Mammary epithelial cell (primary cell): ENCODE measurements at regions of chr15 and their contacts with region 1.

Region 1: DNA sequence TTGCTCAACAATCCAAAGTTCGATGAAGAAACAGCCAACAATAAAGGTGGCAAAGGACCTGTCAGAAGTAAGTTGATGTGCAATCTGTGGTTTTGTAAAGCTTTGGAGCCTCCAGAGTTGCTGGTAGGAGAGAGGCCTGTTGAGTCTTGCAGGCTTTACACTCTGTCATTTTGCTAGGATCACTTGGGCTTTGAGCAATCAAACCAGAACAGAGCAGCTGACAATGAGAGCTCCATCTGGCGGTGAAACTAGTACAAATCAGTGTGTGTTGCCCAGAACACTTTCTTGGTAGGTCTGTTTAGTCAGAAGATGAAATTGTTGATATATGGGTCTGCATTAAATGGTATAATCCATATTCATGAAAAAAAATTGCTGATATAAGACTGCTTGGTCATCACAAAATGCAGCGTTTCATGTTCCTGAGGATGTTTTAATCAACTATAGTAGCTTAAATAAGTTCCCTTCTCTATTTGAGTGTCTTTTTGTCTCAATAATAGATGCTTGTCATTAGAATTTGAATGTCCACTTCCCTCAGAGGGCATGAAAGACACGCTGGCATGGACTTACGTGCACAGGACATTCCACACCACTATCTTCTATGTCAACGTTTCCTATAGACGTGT is 25.7 kb downstream of the TMOD2 start:
- DNase-seq: peak; percentile 92
- H3K4me3 ChIP-seq: no peak overlapping the region
- H3K27ac ChIP-seq: no peak overlapping the region
- H3K4me1 ChIP-seq: peaks cover 15% of the 10 kb centered on the region
- H3K27me3 ChIP-seq: no peaks in the 10 kb centered on the region
- CTCF ChIP-seq: peak; percentile 84 to 87

Region 2: DNA sequence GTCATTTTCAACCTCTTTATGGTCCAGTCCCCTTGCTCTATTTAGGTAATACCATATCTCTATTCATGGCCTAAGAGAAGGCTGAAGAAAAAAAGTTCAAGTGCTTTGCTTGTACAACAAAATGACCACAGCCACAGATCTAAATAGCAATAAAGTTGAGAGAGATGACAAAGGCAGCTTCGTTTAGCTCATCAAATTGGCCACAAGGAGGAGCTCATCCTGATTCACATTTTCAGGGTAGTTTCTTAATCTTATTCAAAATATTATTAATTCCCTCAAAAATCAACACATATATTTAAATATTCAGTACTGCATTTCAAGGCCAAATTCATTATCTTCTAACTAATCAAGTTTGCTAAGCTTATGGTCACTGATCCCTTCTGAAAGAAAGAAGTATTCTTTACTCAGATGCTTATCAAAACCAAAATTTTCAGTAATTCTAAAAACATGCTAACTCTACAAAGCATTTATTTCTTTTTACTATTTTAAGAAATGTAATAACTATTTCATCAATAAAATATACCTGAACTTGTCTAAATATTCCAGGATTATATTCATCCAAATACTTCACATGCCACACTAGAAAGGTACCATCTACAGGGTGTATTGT is 240.0 kb before region 1 on chr15:
- CTCF ChIA-PET with region 1: interaction called, 3 read pairs
- dilution Hi-C with region 1: no loop called
- in situ Hi-C with region 1: no loop called
- intact Hi-C with region 1: loop called (anchors 5 kb)
- DNase-seq: no peak
- H3K4me3 ChIP-seq: no peak overlapping the region
- H3K27ac ChIP-seq: no peak overlapping the region
- H3K4me1 ChIP-seq: no peaks in the 10 kb centered on the region
- H3K27me3 ChIP-seq: no peaks in the 10 kb centered on the region
- CTCF ChIP-seq: peak; percentile 67 to 78

Region 3: DNA sequence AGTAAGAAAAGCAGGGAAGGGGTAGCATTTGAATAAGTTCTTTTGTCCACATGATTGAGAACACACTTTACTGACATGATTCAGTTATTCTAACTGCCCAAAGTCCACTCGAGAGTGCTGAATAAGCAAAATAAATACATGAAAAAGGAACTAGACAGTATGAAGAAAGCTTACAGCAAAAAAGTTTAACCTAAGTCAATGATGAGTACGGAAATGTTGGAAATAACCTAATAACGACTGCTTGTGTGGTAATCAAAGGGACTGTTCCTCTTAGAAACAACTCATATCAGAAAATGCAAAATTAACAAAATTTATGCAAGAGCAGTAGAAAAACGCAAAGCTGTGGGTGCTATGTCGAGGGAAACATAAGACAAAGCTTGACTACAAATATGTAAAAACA is 191.1 kb before region 1 on chr15:
- CTCF ChIA-PET with region 1: no interaction called
- dilution Hi-C with region 1: no loop called
- in situ Hi-C with region 1: no loop called
- intact Hi-C with region 1: no loop called
- DNase-seq: no peak
- H3K4me3 ChIP-seq: no peak overlapping the region
- H3K27ac ChIP-seq: no peak overlapping the region
- H3K4me1 ChIP-seq: no peaks in the 10 kb centered on the region
- H3K27me3 ChIP-seq: no peaks in the 10 kb centered on the region
- CTCF ChIP-seq: no peak

Region 4: GRCh38 chr15:51649659-51650521 is 127.2 kb before region 1 on chr15:
- CTCF ChIA-PET with region 1: interaction called, 57 read pairs
- dilution Hi-C with region 1: no loop called
- in situ Hi-C with region 1: loop called in 1 of 2 experiments (anchors 5 kb)
- intact Hi-C with region 1: loop called (anchors 1 kb)
- DNase-seq: peak; percentile 59
- H3K4me3 ChIP-seq: no peak overlapping the region
- H3K27ac ChIP-seq: no peak overlapping the region
- H3K4me1 ChIP-seq: peaks cover 4% of the 10 kb centered on the region
- H3K27me3 ChIP-seq: no peaks in the 10 kb centered on the region
- CTCF ChIP-seq: peak; percentile 68 to 82

Region 5: DNA sequence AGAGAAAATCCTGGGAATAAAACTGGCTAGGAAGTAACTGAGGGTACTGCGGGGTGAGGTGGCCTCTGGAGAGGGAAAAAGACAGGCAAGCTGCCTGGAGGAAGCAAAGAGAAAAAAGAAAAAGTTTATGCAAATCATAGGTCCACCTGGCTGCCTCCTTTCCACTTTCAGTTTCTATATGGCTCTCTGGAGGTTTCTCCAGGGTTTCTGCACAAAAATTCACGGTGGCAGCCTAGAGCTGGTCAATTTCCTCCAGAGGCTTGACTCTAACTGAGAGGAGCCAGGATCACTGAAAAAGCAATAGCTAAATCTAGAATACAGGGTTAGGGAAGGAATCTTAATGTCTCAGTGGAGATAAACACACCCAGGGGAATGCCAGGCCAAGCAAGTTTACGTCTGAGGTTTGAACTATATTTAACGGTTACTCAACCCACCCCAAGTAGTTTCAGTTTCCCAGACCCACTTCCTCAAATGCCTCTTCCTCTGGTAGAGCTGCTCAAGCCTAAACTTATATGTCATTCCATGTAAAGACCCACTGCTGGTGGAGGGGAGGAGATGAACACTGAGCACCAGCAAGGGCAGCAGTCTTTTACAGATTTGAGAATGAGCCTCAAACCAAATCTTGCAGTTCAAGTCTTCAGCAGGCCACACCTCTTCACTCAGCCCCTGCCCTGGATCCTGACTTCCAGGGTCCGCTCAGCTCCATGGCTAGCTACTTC is 45.4 kb before region 1 on chr15:
- CTCF ChIA-PET with region 1: no interaction called
- dilution Hi-C with region 1: no loop called
- in situ Hi-C with region 1: no loop called
- intact Hi-C with region 1: no loop called
- DNase-seq: no peak
- H3K4me3 ChIP-seq: no peak overlapping the region
- H3K27ac ChIP-seq: no peak overlapping the region
- H3K4me1 ChIP-seq: peaks cover 13% of the 10 kb centered on the region
- H3K27me3 ChIP-seq: no peaks in the 10 kb centered on the region
- CTCF ChIP-seq: no peak

Region 6: DNA sequence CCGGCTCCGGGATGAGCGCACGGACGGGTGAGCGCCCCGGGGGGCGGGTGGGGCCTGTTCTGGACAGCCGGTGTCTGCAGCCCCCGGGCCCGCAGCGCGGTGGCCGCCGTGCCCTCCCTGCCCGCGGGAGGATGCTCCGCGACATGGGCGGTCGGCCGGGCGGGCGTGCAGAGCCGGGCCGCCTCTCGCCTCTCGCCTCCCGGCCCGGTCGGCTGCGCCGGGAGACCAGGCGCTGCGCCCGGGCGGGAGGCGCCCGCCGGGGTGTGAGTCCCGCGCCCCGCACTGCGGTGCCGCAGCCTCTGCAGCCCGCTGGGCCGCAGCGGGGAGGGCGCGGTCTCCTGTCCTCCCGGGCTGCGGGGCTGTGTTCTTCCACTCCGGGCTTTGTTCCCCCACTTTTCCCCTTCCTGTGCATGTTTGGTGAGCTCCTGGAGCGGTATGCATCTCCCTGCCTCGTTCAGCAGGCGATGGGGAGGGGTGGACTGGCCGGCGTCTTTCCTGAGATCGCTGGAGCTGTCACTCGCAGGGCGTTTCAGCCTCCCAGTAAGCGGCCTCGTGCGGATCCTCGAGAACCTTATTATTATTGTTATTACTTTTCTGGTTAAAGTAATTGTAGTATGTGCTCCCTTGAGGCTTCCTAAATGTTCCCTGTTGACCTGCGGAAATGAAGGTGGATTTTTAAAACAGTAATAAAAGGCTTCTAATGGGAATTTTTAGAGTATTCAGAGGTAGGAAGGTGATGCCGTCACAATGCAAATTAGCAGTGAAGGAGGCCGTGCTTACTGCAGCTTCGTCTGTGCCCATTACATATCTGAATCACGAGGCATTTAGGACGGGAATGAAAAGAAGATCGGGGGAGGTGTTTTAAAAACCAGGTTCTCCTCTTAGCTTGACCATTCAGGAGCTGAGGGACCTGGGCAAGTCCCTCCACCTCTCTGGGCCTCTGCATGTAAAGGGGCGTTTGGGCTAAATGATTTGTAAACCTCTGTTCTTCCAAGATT is 25.1 kb before region 1 on chr15:
- CTCF ChIA-PET with region 1: no interaction called
- dilution Hi-C with region 1: no loop called
- in situ Hi-C with region 1: no loop called
- intact Hi-C with region 1: loop called (anchors 1 kb)
- DNase-seq: peak; percentile 65
- H3K4me3 ChIP-seq: peak overlapping the region; percentile 52 to 69 (median 69)
- H3K27ac ChIP-seq: no peak overlapping the region
- H3K4me1 ChIP-seq: peaks cover 4% of the 10 kb centered on the region
- H3K27me3 ChIP-seq: no peaks in the 10 kb centered on the region
- CTCF ChIP-seq: no peak

Region 7: DNA sequence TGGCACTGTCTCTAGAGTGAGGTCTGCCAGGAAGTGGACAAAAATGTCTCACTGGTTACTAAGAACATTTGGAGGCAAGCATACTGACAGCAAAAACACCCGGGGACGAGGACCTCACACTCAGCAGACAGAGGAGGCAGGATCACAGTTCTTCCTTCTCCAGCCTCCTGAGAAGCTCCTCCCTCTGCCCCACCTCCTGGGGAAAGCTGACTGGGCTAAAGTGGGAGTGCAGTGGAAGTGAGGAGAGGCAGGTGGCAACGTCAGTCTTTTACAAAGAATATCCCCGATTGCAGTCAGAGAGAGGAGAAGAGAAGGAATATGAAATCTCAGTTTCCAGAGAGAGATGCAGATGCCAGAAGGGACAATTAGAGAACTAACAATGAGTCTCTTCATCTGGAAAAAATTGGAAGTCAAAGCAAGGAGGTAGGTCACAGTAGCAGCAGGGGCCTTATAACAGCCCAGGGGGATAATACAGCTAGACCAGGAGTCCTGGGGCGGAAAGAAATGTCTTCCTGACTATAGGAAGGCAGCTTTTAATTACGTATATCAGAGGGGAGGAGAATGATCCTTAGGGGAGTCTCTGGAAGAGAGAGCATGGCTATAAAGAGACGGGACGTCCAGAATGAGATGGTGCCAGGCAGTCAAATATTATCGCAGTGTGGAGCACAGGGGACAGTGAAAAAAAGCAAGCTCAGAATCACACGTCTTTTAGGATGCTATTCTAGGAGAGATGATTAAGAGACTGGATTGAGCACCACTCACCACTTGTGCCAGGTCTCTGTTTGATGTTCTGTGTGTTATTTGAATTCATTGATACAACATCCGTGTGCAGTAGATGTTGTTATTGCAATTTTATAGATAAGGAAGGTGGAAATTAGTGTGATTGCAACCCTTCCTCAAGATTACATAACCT is 147.3 kb after region 1 on chr15:
- CTCF ChIA-PET with region 1: no interaction called
- dilution Hi-C with region 1: no loop called
- in situ Hi-C with region 1: no loop called
- intact Hi-C with region 1: no loop called
- DNase-seq: no peak
- H3K4me3 ChIP-seq: no peak overlapping the region
- H3K27ac ChIP-seq: no peak overlapping the region
- H3K4me1 ChIP-seq: no peaks in the 10 kb centered on the region
- H3K27me3 ChIP-seq: no peaks in the 10 kb centered on the region
- CTCF ChIP-seq: no peak

Region 8: GRCh38 chr15:52318729-52319500 is 541.9 kb after region 1 on chr15:
- CTCF ChIA-PET with region 1: no interaction called
- dilution Hi-C with region 1: no loop called
- in situ Hi-C with region 1: no loop called
- intact Hi-C with region 1: no loop called
- DNase-seq: peak; percentile 26
- H3K4me3 ChIP-seq: no peak overlapping the region
- H3K27ac ChIP-seq: no peak overlapping the region
- H3K4me1 ChIP-seq: peaks cover 5% of the 10 kb centered on the region
- H3K27me3 ChIP-seq: no peaks in the 10 kb centered on the region
- CTCF ChIP-seq: no peak